ENCODE measurements at regions of chr7 and their contacts with region 1.

Region 1: DNA sequence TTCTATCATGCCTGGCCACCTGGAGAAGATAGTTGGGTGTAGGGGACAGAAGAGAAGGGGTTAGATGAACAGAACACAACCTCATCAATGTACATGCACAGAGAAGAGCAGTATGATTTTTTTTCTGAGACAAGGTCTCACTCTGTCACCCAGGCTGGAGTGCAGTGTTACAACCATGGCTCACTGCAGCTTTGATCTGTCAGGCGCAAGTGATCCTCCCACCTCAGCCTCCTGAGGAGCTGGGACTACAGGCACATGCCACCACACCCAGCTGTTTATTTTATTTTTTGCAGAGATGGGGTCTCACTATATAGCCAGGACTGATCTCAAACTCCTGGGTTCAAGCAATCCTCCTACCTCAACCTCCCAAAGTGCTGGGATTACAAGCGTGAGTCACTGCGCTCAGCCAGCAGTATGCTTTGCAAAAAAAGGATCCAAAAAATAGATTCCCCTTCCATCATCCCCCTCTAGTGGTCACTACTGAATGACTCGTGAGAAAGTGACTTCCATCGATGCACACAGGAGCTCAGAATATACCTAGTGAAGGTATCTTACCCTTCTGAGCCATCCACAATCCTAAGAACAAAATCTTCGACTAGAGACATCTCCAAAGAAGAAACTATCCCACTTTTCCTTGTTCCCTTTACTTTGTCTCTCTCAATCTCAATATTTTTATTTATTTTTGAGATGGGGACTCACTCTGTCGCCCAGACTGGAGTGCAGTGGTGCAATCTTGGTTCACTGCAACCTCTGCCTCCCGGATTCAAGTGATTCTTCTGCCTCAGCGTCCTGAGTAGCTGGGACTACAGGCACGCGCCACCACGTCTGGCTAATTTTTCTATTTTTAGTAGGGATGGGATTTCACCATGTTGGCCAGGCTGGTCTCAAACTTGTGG is 21.0 kb downstream of the ZCWPW1 start:
- H3K4me3 ChIP-seq: no peak overlapping the region
- H3K27ac ChIP-seq: no peak overlapping the region
- H3K4me1 ChIP-seq: 0 out of 2 replicates have a peak, but pooled peaks cover 6% of the 10 kb centered on the region
- CTCF ChIP-seq: peak; percentile 73

Region 2: DNA sequence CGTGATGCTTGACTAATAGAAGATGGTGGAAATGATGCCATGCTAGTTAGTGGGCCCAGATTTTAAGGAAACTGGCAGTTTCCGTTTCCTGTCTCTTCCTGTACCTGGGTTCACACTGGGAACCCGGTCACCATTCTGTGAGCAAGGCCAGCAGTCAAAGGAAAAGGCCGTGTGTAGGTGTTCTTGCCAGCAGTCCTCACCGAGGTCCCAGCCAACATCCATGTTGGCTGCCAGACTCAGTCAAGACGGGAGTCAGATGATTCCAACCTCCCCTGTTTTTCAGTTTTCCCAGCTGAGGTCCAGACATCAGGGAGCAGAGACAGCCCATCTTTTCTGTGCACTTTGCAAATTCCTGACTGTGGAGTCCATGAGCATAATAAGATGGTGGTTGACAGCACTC is 64.8 kb before region 1 on chr7:
- CTCF ChIA-PET with region 1: interaction called, 10 read pairs
- POLR2A ChIA-PET with region 1: no interaction called
- H3K4me3 ChIP-seq: no peak overlapping the region
- H3K27ac ChIP-seq: no peak overlapping the region
- H3K4me1 ChIP-seq: 0 out of 2 replicates have a peak, but pooled peaks cover 3% of the 10 kb centered on the region
- CTCF ChIP-seq: no peak

Region 3: GRCh38 chr7:100364480-100364879 is 43.1 kb before region 1 on chr7:
- CTCF ChIA-PET with region 1: interaction called, 15 read pairs
- POLR2A ChIA-PET with region 1: no interaction called
- H3K4me3 ChIP-seq: no peak overlapping the region
- H3K27ac ChIP-seq: no peak overlapping the region
- H3K4me1 ChIP-seq: no peaks in the 10 kb centered on the region
- CTCF ChIP-seq: no peak

Region 4: DNA sequence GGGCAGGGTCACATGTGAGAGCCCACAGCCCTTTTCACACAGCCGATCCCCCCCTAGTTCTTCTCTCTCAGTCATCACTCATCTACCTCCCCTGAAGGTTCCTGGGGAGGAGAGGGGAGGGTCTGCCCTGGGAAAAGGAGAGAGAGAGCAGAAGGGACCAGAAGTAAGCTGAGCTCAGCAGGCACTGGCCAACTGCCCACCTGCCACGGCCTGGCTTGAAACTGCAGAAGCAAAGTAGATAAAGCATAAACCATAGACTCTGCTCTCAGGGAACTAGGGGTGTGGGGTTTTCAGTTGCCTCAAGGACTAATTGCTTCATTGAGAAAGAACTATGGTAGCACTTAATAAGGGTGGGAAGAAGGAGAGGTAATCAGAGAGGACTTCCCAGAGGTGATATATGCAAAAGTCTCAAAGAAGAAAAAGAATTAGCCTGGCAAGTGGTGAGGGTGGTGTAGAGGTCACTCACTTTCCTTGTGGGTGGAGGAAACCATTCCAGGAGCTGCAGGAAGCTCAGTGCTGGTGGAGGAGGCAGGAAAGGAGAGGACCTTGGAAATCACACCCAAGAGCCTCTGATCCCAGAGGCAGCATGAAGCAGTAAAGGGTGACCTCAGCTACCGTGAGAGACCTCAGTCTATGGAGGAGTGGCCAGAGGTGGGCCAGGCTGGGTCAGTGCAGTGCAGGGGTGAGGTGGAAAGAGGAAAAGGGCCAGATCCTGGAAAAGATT is 17.1 kb before region 1 on chr7:
- CTCF ChIA-PET with region 1: interaction called, 22 read pairs
- POLR2A ChIA-PET with region 1: no interaction called
- H3K4me3 ChIP-seq: no peak overlapping the region
- H3K27ac ChIP-seq: no peak overlapping the region
- H3K4me1 ChIP-seq: no peaks in the 10 kb centered on the region
- CTCF ChIP-seq: no peak

Region 5: DNA sequence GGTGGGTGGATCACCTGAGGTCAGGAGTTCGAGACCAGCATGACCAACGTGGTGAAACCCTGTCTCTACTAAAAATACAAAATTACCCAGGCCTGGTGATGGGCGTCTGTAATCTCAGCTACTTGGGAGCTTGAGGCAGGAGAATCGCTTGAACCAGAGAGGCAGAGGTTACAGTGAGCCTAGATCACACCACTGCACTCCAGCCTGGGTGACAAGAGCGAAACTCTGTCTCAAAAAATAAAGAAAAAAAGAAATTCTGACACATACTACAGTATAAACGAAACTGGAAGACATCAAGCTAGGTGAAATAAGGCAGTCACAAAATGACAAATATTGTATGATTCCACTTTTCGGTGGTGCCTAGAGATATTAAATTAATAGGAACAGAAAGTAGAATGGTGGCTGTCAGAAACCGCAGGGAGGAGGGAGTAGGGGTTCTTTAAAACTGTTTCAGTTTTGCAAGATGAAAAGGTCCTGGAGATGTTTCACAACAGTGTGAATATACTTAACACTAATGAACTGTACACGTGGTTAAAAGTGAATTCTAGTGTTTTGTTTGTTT is 11.0 kb before region 1 on chr7:
- CTCF ChIA-PET with region 1: interaction called, 22 read pairs
- POLR2A ChIA-PET with region 1: no interaction called
- H3K4me3 ChIP-seq: no peak overlapping the region
- H3K27ac ChIP-seq: no peak overlapping the region
- H3K4me1 ChIP-seq: no peaks in the 10 kb centered on the region
- CTCF ChIP-seq: no peak

Region 6: GRCh38 chr7:100418930-100419659 is 11.6 kb after region 1 on chr7:
- CTCF ChIA-PET with region 1: interaction called, 18 read pairs
- POLR2A ChIA-PET with region 1: no interaction called
- H3K4me3 ChIP-seq: no peak overlapping the region
- H3K27ac ChIP-seq: no peak overlapping the region
- H3K4me1 ChIP-seq: no peaks in the 10 kb centered on the region
- CTCF ChIP-seq: no peak

Measured in HEK293 (cell line).